Right ventricle myocardium superior (tissue), 1 donor: ENCODE measurements at regions of chr19 and their contacts with region 1.

Region 1: GRCh38 chr19:2869618-2870017 is 2.5 kb downstream of the ZNF556 start:
- DNase-seq: no peak
- ATAC-seq: no peak

Region 2: DNA sequence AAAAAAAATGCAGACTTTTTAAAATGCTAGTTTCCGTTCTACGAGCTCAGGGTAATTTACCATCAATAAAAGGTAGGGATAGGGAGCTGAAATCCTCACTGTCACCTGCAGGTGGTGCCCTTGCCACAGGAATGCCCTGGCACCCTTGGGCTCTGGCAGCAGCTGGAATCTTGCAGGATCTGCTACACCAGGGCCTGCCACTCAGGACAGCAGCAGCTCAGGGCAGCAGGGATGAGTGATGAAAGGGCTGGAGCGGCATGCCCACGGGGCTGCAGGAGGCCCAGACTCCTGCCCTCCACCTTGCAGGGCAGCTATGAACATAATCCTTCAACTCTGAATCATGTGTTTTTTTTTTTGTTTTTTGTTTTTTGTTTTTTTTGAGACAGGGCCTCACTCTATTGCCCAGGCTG is 221.1 kb before region 1 on chr19:
- intact Hi-C with region 1: loop called (anchors 5 kb)
- DNase-seq: peak; percentile 80
- ATAC-seq: peak; percentile 85

Region 3: DNA sequence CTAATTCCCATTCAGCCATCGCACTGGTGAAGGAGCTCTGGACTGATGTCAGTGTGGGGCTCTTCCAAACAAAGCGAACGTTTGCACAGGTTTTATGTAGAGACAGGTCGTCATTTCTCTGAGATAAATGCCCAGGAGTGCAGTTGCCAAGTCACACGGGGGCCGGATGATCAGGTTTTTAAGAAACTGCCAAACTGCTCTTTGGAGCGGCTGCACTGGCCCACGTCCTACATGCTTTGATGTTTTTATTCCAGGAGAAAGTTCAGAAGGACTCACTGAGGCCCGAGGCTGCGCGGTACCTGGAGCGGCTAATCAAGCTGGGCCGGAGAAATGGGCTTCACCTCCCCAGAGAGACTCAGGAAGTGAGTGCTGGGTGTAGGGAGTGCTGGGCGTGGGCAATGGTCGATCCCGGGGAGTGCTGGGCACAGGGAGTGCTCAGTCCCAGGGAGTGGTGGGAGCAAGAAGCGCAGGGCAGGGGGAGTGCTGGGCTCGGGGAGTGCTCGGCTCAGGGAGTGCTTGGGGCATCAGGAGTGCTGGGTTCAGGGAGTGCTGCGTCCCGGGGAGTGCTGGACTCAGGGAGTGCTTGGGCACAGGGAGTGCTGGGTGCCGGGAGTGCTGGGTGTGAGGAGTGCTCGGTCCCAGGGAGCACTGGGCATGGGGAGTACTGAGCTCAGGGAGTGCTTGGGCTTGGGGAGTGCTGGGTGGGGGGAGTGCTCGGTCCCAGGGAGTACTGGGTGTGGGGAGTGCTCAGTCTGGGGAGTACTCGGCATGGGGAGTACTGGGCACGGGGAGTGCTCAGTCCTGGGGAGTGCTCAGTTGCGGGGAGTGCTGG is 73.6 kb before region 1 on chr19:
- intact Hi-C with region 1: no loop called
- DNase-seq: no peak
- ATAC-seq: no peak